ENCODE measurements at regions of chr10 and their contacts with region 1.

Region 1: DNA sequence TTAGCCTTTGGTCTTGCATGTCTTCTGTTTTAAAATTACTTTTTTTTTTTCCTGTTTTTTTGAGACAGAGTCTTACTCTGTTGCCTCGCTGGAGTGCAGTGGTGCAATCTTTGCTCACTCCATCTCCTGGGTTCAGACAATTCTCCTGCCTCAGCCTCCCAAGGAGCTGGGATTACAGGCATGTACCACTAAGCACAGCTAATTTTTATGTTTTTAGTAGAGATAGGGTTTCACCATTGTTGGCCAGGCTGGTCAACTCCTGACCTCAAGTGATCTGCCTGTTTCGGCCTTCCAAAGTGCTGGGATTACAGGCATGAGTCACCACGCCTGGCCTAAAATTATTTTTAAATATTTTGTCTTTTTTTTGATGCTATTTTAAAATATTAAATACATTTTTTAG is 38.5 kb downstream of the MLLT10 start:
- DNase-seq: no peak
- H3K4me3 ChIP-seq: no peak overlapping the region
- H3K4me3 Mint-ChIP-seq: no peak overlapping the region
- H3K27ac Mint-ChIP-seq: peak overlapping the region; percentile 21
- H3K4me1 ChIP-seq: no peaks in the 10 kb centered on the region; the same call in 1 of the 2 replicates
- H3K4me1 Mint-ChIP-seq: peaks cover 21% of the 10 kb centered on the region
- H3K27me3 ChIP-seq: no peaks in the 10 kb centered on the region
- H3K27me3 Mint-ChIP-seq: no peaks in the 10 kb centered on the region
- CTCF ChIP-seq: no peak

Region 2: GRCh38 chr10:21135023-21135931 is 437.3 kb before region 1 on chr10:
- CTCF ChIA-PET with region 1: no interaction called
- POLR2A ChIA-PET with region 1: no interaction called
- intact Hi-C with region 1: no loop called
- DNase-seq: no peak
- H3K4me3 ChIP-seq: no peak overlapping the region
- H3K4me3 Mint-ChIP-seq: no peak overlapping the region
- H3K27ac Mint-ChIP-seq: no peak overlapping the region
- H3K4me1 ChIP-seq: peaks cover 9% of the 10 kb centered on the region; the same call in 1 of the 2 replicates
- H3K4me1 Mint-ChIP-seq: peaks cover 35% of the 10 kb centered on the region
- H3K27me3 ChIP-seq: no peaks in the 10 kb centered on the region
- H3K27me3 Mint-ChIP-seq: no peaks in the 10 kb centered on the region
- CTCF ChIP-seq: no peak

Region 3: GRCh38 chr10:21584834-21585530 is 12.4 kb after region 1 on chr10:
- CTCF ChIA-PET with region 1: no interaction called
- POLR2A ChIA-PET with region 1: no interaction called
- intact Hi-C with region 1: no loop called
- DNase-seq: no peak
- H3K4me3 ChIP-seq: no peak overlapping the region
- H3K4me3 Mint-ChIP-seq: no peak overlapping the region
- H3K27ac Mint-ChIP-seq: no peak overlapping the region
- H3K4me1 ChIP-seq: peaks cover 9% of the 10 kb centered on the region; the same call in 1 of the 2 replicates
- H3K4me1 Mint-ChIP-seq: peaks cover 24% of the 10 kb centered on the region
- H3K27me3 ChIP-seq: no peaks in the 10 kb centered on the region
- H3K27me3 Mint-ChIP-seq: no peaks in the 10 kb centered on the region
- CTCF ChIP-seq: no peak

Region 4: GRCh38 chr10:22016046-22016705 is 443.6 kb after region 1 on chr10:
- CTCF ChIA-PET with region 1: interaction called, 11 read pairs
- POLR2A ChIA-PET with region 1: no interaction called
- intact Hi-C with region 1: no loop called
- DNase-seq: no peak
- H3K4me3 ChIP-seq: no peak overlapping the region
- H3K4me3 Mint-ChIP-seq: no peak overlapping the region
- H3K27ac Mint-ChIP-seq: no peak overlapping the region
- H3K4me1 ChIP-seq: peaks cover 10% of the 10 kb centered on the region
- H3K4me1 Mint-ChIP-seq: peaks cover 12% of the 10 kb centered on the region
- H3K27me3 ChIP-seq: no peaks in the 10 kb centered on the region
- H3K27me3 Mint-ChIP-seq: peaks cover 3% of the 10 kb centered on the region
- CTCF ChIP-seq: no peak

Measured in Caco-2 (cell line).